ENCODE measurements at regions of chr7 and their contacts with region 1.

Region 1: GRCh38 chr7:111735661-111736551 is 173.6 kb upstream of the IMMP2L start:
- DNase-seq: peak; percentile 54
- H3K4me3 ChIP-seq: no peak overlapping the region
- H3K27ac ChIP-seq: no peak overlapping the region
- H3K4me1 ChIP-seq: peaks cover 5% of the 10 kb centered on the region
- H3K27me3 ChIP-seq: no peaks in the 10 kb centered on the region
- CTCF ChIP-seq: peak; percentile 72 to 81

Region 2: DNA sequence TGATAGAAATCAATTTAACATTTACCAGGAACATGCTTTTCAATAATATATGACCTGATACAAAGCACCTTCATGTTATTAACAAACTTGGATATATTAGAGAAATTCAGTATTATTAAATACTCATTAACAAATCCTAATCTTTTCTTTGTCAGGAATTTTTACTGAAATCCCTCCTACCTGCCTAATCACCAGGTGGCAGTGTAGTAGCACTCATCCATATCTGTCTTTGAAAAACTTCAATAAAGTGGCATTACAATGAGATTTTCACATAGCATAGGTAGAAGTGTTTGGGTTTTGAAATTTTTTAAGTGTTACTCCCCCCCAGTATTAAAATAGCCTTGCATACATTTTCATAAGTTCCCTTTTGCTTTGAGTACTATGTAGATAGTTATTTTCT is 1891.5 kb before region 1 on chr7:
- CTCF ChIA-PET with region 1: no interaction called
- dilution Hi-C with region 1: no loop called
- in situ Hi-C with region 1: no loop called
- intact Hi-C with region 1: loop called (anchors 5 kb)
- DNase-seq: no peak
- H3K4me3 ChIP-seq: no peak overlapping the region
- H3K27ac ChIP-seq: no peak overlapping the region
- H3K4me1 ChIP-seq: no peaks in the 10 kb centered on the region
- H3K27me3 ChIP-seq: no peaks in the 10 kb centered on the region
- CTCF ChIP-seq: peak; percentile 50 to 68

Region 3: GRCh38 chr7:111089822-111090426 is 646.0 kb before region 1 on chr7:
- CTCF ChIA-PET with region 1: no interaction called
- dilution Hi-C with region 1: no loop called
- in situ Hi-C with region 1: loop called in 1 of 2 experiments (anchors 25 kb)
- intact Hi-C with region 1: loop called (anchors 2 kb)
- DNase-seq: peak; percentile 24
- H3K4me3 ChIP-seq: no peak overlapping the region
- H3K27ac ChIP-seq: no peak overlapping the region
- H3K4me1 ChIP-seq: no peaks in the 10 kb centered on the region
- H3K27me3 ChIP-seq: no peaks in the 10 kb centered on the region
- CTCF ChIP-seq: peak; percentile 71 to 76

Region 4: GRCh38 chr7:111329367-111330234 is 406.3 kb before region 1 on chr7:
- CTCF ChIA-PET with region 1: no interaction called
- dilution Hi-C with region 1: no loop called
- in situ Hi-C with region 1: loop called in 1 of 2 experiments (anchors 10 kb)
- intact Hi-C with region 1: loop called (anchors 5 kb)
- DNase-seq: no peak
- H3K4me3 ChIP-seq: no peak overlapping the region
- H3K27ac ChIP-seq: no peak overlapping the region
- H3K4me1 ChIP-seq: peaks cover 6% of the 10 kb centered on the region
- H3K27me3 ChIP-seq: no peaks in the 10 kb centered on the region
- CTCF ChIP-seq: peak in 1 of 2 donors; percentile 37

Region 5: GRCh38 chr7:111639934-111640333 is 96.0 kb before region 1 on chr7:
- CTCF ChIA-PET with region 1: no interaction called
- dilution Hi-C with region 1: loop called (anchors 5 kb)
- in situ Hi-C with region 1: no loop called
- intact Hi-C with region 1: loop called (anchors 1 kb)
- DNase-seq: no peak
- H3K4me3 ChIP-seq: no peak overlapping the region
- H3K27ac ChIP-seq: no peak overlapping the region
- H3K4me1 ChIP-seq: no peaks in the 10 kb centered on the region
- H3K27me3 ChIP-seq: no peaks in the 10 kb centered on the region
- CTCF ChIP-seq: no peak

Region 6: DNA sequence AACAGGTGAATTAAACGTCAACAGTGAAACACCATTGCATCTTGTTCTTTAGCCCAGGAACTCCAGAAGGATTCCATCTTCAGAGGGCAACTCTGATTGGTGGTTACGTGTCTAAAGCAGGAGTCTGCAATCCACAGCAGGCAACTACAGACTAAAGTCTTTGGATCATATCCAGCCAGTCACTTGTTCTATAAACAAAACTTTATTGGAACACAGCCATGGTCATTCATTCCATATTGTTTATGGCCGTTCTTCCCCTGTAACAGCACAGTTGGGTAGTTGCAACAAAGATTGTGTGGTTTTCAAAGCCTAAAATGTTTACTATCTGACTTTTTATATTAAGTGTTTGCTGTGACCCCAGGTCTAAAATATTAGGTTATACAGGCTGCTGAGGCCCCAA is 78.9 kb before region 1 on chr7:
- CTCF ChIA-PET with region 1: no interaction called
- dilution Hi-C with region 1: no loop called
- in situ Hi-C with region 1: no loop called
- intact Hi-C with region 1: no loop called
- DNase-seq: no peak
- H3K4me3 ChIP-seq: no peak overlapping the region
- H3K27ac ChIP-seq: no peak overlapping the region
- H3K4me1 ChIP-seq: no peaks in the 10 kb centered on the region
- H3K27me3 ChIP-seq: no peaks in the 10 kb centered on the region
- CTCF ChIP-seq: no peak

Region 7: GRCh38 chr7:111785073-111785472 is 49.2 kb after region 1 on chr7:
- CTCF ChIA-PET with region 1: no interaction called
- dilution Hi-C with region 1: no loop called
- in situ Hi-C with region 1: no loop called
- intact Hi-C with region 1: no loop called
- DNase-seq: no peak
- H3K4me3 ChIP-seq: no peak overlapping the region
- H3K27ac ChIP-seq: no peak overlapping the region
- H3K4me1 ChIP-seq: no peaks in the 10 kb centered on the region
- H3K27me3 ChIP-seq: no peaks in the 10 kb centered on the region
- CTCF ChIP-seq: no peak

Measured in mammary epithelial cell (primary cell).